ENCODE measurements at regions of chr10 and their contacts with region 1.

Region 1: DNA sequence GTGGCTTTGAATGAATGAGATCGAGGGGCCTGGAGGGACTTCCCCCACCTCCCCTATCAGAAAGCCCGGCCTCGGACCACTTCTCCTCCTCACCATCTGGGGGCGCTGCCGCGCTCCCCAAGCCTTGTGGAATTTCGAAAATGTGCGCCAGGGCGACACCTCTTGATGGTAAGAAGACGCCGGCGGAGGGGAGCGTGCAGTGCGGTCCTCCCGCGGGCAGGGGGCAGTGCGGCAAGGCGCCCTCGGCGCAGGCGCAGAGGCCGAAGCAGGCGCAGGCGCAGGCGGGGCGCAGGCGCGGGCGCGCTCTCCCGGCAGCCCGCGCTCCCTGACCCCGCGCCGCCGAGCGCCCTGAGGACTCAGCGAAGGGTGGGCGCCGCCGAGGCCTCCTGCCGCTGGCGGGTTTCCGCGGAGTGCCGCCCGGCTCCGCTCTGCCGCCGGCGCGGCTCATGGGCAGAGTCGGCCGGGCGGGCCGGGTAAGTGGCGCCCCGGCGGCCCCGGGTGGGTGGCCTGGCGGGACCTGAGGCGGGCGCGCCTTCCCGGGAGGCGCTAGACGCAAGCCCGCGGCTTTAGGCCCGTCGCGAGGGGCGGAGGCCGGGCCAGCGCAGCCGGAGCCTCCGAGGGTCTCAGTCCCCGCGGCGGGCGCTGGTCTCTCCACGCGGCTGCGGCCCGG is at the start of gene RBM17:
- DNase-seq: peak; percentile 95
- H3K4me3 ChIP-seq: peak within 1 kb of the TSS; percentile 98
- H3K27ac ChIP-seq: peak within 1 kb of the TSS; percentile 97
- H3K4me1 ChIP-seq: peaks cover 81% of the 10 kb centered on the region
- H3K27me3 ChIP-seq: peaks cover 5% of the 10 kb centered on the region
- CTCF ChIP-seq: peak; percentile 100
- total RNA-seq, gene RBM17: 56.1 TPM

Region 2: GRCh38 chr10:5987747-5988146 is 101.1 kb before region 1 on chr10:
- intact Hi-C with region 1: no loop called
- DNase-seq: peak; percentile 78
- H3K4me3 ChIP-seq: no peak overlapping the region
- H3K27ac ChIP-seq: peak overlapping the region; percentile 68
- H3K4me1 ChIP-seq: peaks cover 11% of the 10 kb centered on the region
- H3K27me3 ChIP-seq: peaks cover 4% of the 10 kb centered on the region
- CTCF ChIP-seq: no peak

Region 3: DNA sequence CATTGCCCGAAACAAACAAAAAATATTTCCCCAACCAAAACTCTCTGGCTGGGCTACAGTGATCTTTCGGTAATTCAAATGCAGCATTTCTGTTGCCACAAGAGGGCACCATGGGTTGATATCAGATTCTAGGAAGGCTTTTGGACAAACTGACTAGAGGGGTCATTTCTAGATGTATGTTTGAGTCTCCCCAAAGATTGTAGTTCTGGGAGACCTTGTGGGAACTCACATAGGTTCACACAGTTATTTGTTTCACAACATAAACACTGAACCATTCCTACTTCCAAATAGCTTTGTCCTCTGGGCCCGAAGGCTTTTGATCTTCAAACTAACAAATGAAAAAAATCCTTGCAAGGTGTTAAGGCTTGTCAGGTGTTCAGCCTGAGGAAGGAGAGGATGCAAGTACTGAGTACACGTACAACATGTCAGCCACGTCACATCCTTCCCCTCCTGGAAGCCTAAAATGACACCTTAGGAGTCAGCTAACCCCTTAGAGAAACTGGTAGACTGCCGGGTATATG is 74.6 kb before region 1 on chr10:
- intact Hi-C with region 1: loop called (anchors 5 kb)
- DNase-seq: no peak
- H3K4me3 ChIP-seq: no peak overlapping the region
- H3K27ac ChIP-seq: peak overlapping the region; percentile 36
- H3K4me1 ChIP-seq: peaks cover 9% of the 10 kb centered on the region
- H3K27me3 ChIP-seq: no peaks in the 10 kb centered on the region
- CTCF ChIP-seq: peak; percentile 86

Region 4: DNA sequence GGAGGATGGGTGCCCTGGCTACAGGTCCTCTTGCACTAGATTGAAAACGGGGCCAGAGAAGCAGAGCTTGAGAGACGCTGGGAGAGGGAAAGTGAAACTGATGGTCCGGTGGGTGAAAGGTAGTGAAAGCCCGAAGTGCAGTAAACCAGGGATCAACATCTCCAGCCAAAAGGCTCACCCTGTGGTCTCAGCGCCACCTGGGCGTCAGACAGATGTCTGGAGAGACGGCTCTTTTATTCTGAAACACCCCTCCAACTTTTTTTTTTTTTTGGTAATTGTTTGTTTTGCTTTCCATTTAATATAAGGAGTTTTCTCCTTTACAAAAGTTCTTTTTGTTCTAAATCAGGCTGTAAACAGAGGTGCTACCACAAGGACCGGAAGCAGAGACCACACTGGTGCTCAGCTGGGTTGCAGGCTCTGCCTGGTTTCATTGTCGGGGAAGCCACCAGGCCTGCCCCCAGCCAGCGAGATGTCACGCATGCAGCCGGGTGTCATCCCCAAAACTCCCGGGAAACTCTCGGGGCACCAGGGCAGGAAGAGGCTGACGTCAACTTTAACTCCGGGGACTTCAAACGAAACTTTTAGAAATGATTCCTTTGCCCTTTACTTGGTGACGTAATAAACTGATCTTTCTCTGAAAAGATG is 37.9 kb before region 1 on chr10:
- intact Hi-C with region 1: loop called (anchors 5 kb)
- DNase-seq: peak; percentile 46
- H3K4me3 ChIP-seq: peak overlapping the region; percentile 57
- H3K27ac ChIP-seq: peak overlapping the region; percentile 81
- H3K4me1 ChIP-seq: peaks cover 44% of the 10 kb centered on the region
- H3K27me3 ChIP-seq: no peaks in the 10 kb centered on the region
- CTCF ChIP-seq: peak; percentile 53

Region 5: DNA sequence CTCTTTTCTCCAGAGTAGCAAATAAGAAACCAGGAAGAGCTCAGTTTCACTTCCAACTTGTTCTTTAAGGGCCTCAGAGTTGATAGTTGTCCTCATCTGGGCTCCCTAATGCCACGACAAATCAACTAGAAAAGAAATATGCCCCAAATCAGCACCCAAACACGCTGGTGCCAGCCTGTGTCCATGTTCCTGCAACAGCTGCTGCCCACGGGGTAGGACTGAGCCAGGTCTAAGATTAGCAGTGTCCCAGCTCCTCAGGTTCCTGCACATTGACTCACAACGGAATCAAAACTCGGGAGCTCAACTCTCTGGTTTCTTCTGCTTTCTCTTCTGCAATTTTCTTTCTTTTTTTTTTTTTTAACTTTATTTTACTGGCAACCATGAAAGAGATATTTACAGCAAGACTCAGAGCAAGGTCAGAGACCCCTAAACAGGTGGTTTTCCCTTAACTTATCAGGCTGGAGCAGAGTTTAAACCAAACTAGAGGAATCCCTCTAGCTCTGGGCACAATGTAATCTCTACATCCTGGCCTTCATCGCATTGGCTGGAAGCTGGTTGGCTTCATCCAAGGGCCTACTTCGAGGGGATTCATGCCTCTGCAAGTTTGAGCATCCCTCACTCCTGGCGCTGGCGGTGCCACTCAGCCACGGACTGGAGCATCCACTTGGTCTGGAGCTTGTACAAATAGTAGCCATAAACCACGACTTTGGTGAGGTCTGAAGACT is 240.0 kb after region 1 on chr10:
- intact Hi-C with region 1: no loop called
- DNase-seq: no peak
- H3K4me3 ChIP-seq: no peak overlapping the region
- H3K27ac ChIP-seq: peak overlapping the region; percentile 36
- H3K4me1 ChIP-seq: no peaks in the 10 kb centered on the region
- H3K27me3 ChIP-seq: no peaks in the 10 kb centered on the region
- CTCF ChIP-seq: no peak

Measured in left ventricle myocardium inferior (tissue), 1 donor.